ENCODE measurements at regions of chr13 and their contacts with region 1.

Region 1: GRCh38 chr13:33610471-33611015 is 207.4 kb upstream of the RFC3 start:
- DNase-seq: peak; percentile 77 to 81
- ATAC-seq: peak; percentile 82 to 93 (median 87)
- H3K4me3 ChIP-seq: peak overlapping the region in 9 of 10 donors; percentile 16 to 52 (median 42)
- H3K27ac ChIP-seq: peak overlapping the region; percentile 77 to 98 (median 90)
- H3K4me1 ChIP-seq: peaks cover 0 to 52% (median 28%) of the 10 kb centered on the region in 9 donors
- H3K27me3 ChIP-seq: no peaks in the 10 kb centered on the region
- CTCF ChIP-seq: peak in 4 of 9 donors; percentile 11 to 42 (median 24)

Region 2: DNA sequence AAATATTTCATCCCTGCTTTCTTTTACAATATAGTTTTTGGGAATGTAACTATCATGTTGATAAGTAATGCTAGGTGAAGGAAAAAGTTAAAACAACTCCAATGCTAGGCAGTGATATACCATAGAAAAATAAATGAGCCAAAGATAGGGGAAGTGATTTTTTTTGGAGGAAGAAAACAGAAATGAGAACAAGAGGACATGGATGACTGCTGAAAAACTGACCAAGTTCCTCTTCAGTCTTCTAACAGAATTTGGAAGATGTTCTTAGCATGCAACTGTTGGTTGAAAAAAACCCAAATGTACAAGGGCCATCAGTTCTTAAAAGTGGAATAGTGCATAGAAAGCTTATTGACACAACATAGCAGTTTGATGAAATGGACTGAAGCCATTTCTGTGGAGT is 62.5 kb before region 1 on chr13:
- intact Hi-C with region 1: loop called in 2 of 10 experiments (anchors 5 to 10 kb)
- DNase-seq: no peak
- ATAC-seq: no peak
- H3K4me3 ChIP-seq: no peak overlapping the region
- H3K27ac ChIP-seq: peak overlapping the region in 1 of 10 donors; percentile 55
- H3K4me1 ChIP-seq: peaks cover 0 to 30% (median 13%) of the 10 kb centered on the region in 9 donors
- H3K27me3 ChIP-seq: no peaks in the 10 kb centered on the region
- CTCF ChIP-seq: no peak

Region 3: GRCh38 chr13:33554919-33555791 is 55.4 kb before region 1 on chr13:
- intact Hi-C with region 1: loop called in 3 of 10 experiments (anchors 2 to 10 kb)
- DNase-seq: no peak
- ATAC-seq: peak in 2 of 8 donors; percentile 31 to 51
- H3K4me3 ChIP-seq: no peak overlapping the region
- H3K27ac ChIP-seq: peak overlapping the region in 6 of 10 donors; percentile 8 to 63 (median 20)
- H3K4me1 ChIP-seq: peaks cover 0 to 18% (median 5%) of the 10 kb centered on the region in 9 donors
- H3K27me3 ChIP-seq: no peaks in the 10 kb centered on the region
- CTCF ChIP-seq: no peak

Region 4: GRCh38 chr13:33560726-33561125 is 49.8 kb before region 1 on chr13:
- intact Hi-C with region 1: loop called in 3 of 10 experiments (anchors 2 to 10 kb)
- DNase-seq: no peak
- ATAC-seq: no peak
- H3K4me3 ChIP-seq: no peak overlapping the region
- H3K27ac ChIP-seq: no peak overlapping the region
- H3K4me1 ChIP-seq: peaks cover 0 to 17% (median 2%) of the 10 kb centered on the region in 9 donors
- H3K27me3 ChIP-seq: no peaks in the 10 kb centered on the region
- CTCF ChIP-seq: no peak

Region 5: DNA sequence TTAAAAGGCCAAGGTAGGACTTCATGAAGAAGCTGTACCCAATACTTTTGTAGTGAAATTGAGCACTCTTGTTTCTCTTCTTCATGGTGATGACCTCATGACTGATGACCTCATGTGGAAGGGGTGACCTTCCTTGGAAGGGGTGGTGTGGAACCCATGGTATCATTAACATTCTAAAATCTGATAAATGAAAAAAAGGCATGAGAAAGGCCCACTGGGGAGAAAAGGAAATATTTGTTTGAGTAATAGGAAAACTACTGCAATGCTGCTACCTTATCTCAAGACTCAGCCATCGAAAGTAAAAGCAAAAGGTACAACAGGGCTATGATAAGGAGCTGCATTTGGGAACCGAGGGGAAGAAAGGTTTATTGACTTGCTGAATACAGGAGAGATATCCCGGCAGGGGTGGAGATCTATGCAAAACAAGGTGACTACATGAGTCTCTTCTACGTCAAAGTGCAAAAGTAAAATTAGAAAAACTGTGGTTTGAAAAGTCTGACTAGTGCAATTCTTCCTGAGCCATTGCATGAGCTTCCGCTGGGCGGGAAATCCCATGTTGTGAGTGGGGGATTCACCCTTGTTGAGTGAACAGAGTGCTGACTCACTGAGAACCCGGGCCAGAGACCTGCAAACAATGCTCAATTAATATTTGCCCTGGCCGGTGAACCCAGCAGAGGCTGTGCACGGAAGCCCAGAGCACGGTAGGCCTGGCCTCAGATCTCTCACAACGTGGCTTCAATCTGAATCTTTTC is 68.5 kb after region 1 on chr13:
- intact Hi-C with region 1: loop called in 4 of 10 experiments (anchors 2 to 5 kb)
- DNase-seq: peak; percentile 36 to 75
- ATAC-seq: peak; percentile 53 to 81 (median 72)
- H3K4me3 ChIP-seq: peak overlapping the region in 5 of 10 donors; percentile 1 to 22 (median 10)
- H3K27ac ChIP-seq: peak overlapping the region in 9 of 10 donors; percentile 34 to 73 (median 61)
- H3K4me1 ChIP-seq: peaks cover 0 to 41% (median 30%) of the 10 kb centered on the region in 9 donors
- H3K27me3 ChIP-seq: no peaks in the 10 kb centered on the region
- CTCF ChIP-seq: no peak

Region 6: DNA sequence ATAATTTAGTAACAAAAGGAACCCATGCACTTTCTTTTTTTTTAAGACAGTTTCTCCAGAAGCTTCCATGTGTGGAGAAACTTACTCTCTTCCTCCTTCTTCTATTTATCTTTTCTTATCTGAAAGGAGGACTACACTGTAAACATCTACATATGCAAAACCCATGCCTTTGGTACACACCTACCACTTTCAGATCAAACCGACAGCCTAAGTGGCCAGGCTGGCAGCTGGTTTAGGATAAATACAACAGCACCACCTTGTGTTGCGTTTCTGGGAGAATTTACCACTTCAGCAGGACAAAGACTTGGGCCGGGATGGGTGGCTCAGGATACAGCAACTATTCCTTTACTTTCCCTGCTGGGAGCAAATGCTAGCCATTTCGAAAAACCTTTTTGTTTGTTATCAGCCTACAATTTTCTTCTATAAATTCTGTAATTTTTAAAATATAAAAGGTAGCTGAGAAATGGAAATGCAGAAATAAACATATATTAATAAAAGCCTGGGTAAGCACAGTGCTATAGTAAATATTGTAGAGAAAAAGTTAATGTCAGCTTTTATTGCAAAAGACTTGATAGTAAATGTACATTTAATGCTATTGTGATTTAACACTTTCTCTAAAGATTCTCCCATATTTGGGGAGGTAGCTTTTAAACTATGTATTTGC is 113.4 kb after region 1 on chr13:
- intact Hi-C with region 1: loop called in 6 of 10 experiments (anchors 2 to 10 kb)
- DNase-seq: peak; percentile 27 to 86
- ATAC-seq: peak; percentile 83 to 94 (median 88)
- H3K4me3 ChIP-seq: no peak overlapping the region
- H3K27ac ChIP-seq: peak overlapping the region in 7 of 10 donors; percentile 62 to 84 (median 77)
- H3K4me1 ChIP-seq: peaks cover 6 to 55% (median 36%) of the 10 kb centered on the region in 9 donors
- H3K27me3 ChIP-seq: no peaks in the 10 kb centered on the region
- CTCF ChIP-seq: peak; percentile 41 to 90 (median 78)